Psoas muscle (tissue), 8 donors: ENCODE measurements at regions of chr15 and their contacts with region 1.

Region 1: DNA sequence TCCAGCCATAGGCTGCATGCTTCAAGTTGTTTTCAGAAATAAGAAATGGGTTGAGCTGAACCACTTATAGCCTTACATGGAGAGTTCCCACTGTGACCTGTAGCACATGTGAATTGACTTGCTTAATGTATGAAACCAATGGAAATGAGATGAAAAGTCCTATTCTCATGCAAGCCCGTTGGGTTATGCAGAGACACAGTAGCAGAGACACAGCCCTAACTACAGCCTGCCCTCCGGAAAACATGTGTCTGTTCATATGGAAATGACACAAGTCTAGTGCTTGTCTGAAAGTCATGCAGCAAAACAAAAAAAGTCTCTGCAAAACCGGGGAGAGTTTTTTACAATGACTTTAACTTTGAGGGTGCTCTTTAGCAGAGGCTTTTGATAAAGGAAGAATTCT is 14.4 kb downstream of the HIGD2B start:
- DNase-seq: no peak
- ATAC-seq: no peak
- H3K4me3 ChIP-seq: no peak overlapping the region
- H3K27ac ChIP-seq: no peak overlapping the region
- H3K4me1 ChIP-seq: no peaks in the 10 kb centered on the region
- H3K27me3 ChIP-seq: no peaks in the 10 kb centered on the region
- CTCF ChIP-seq: no peak

Region 2: GRCh38 chr15:72599855-72600464 is 71.6 kb before region 1 on chr15:
- intact Hi-C with region 1: loop called in 1 of 2 experiments (anchors 5 kb)
- DNase-seq: no peak
- ATAC-seq: peak in 1 of 4 donors; percentile 68
- H3K4me3 ChIP-seq: no peak overlapping the region
- H3K27ac ChIP-seq: no peak overlapping the region
- H3K4me1 ChIP-seq: peaks cover 5% of the 10 kb centered on the region
- H3K27me3 ChIP-seq: no peaks in the 10 kb centered on the region
- CTCF ChIP-seq: peak; percentile 56